SK-N-SH (cell line): ENCODE measurements at regions of chr1 and their contacts with region 1.

Region 1: GRCh38 chr1:74504125-74504932 is 8.1 kb downstream of the LRRC53 start:
- DNase-seq: peak; percentile 59
- H3K4me3 ChIP-seq: no peak overlapping the region; a peak in 1 of 4 replicates
- H3K27ac ChIP-seq: peak overlapping the region in 1 of 2 experiments; percentile 95; a peak in 2 of 4 replicates
- H3K4me1 ChIP-seq: peaks cover 0 to 23% of the 10 kb centered on the region in 2 experiments; a peak in 2 of 4 replicates
- H3K27me3 ChIP-seq: no peaks in the 10 kb centered on the region
- CTCF ChIP-seq: peak; percentile 81
- EP300 ChIP-seq: no peak
- RAD21 ChIP-seq: peak; percentile 84

Region 2: GRCh38 chr1:74468982-74469603 is 35.2 kb before region 1 on chr1:
- CTCF ChIA-PET with region 1: interaction called, 15 read pairs
- POLR2A ChIA-PET with region 1: no interaction called
- DNase-seq: peak; percentile 66
- H3K4me3 ChIP-seq: peak overlapping the region in 1 of 2 experiments; percentile 41; a peak in 1 of 4 replicates
- H3K27ac ChIP-seq: no peak overlapping the region
- H3K4me1 ChIP-seq: no peaks in the 10 kb centered on the region
- H3K27me3 ChIP-seq: no peaks in the 10 kb centered on the region
- CTCF ChIP-seq: peak; percentile 75
- EP300 ChIP-seq: no peak
- RAD21 ChIP-seq: peak; percentile 89

Region 3: GRCh38 chr1:74485622-74486021 is 18.7 kb before region 1 on chr1:
- CTCF ChIA-PET with region 1: interaction called, 28 read pairs
- POLR2A ChIA-PET with region 1: no interaction called
- DNase-seq: no peak
- H3K4me3 ChIP-seq: no peak overlapping the region
- H3K27ac ChIP-seq: no peak overlapping the region
- H3K4me1 ChIP-seq: no peaks in the 10 kb centered on the region
- H3K27me3 ChIP-seq: no peaks in the 10 kb centered on the region
- CTCF ChIP-seq: no peak
- EP300 ChIP-seq: no peak
- RAD21 ChIP-seq: no peak

Region 4: GRCh38 chr1:74526708-74527107 is 22.4 kb after region 1 on chr1:
- CTCF ChIA-PET with region 1: no interaction called
- POLR2A ChIA-PET with region 1: no interaction called
- DNase-seq: no peak
- H3K4me3 ChIP-seq: no peak overlapping the region
- H3K27ac ChIP-seq: no peak overlapping the region
- H3K4me1 ChIP-seq: peaks cover 0 to 5% of the 10 kb centered on the region in 2 experiments; a peak in 2 of 4 replicates
- H3K27me3 ChIP-seq: no peaks in the 10 kb centered on the region
- CTCF ChIP-seq: no peak
- EP300 ChIP-seq: no peak
- RAD21 ChIP-seq: no peak

Region 5: GRCh38 chr1:74689621-74690363 is 185.5 kb after region 1 on chr1:
- CTCF ChIA-PET with region 1: interaction called, 55 read pairs
- POLR2A ChIA-PET with region 1: no interaction called
- DNase-seq: peak; percentile 25
- H3K4me3 ChIP-seq: peak overlapping the region in 1 of 2 experiments; percentile 20; a peak in 1 of 4 replicates
- H3K27ac ChIP-seq: no peak overlapping the region
- H3K4me1 ChIP-seq: no peaks in the 10 kb centered on the region; a peak in 2 of 4 replicates
- H3K27me3 ChIP-seq: no peaks in the 10 kb centered on the region
- CTCF ChIP-seq: peak; percentile 91
- EP300 ChIP-seq: no peak
- RAD21 ChIP-seq: peak; percentile 97